HepG2 (cell line): ENCODE measurements at regions of chr11 and their contacts with region 1.

Region 1: GRCh38 chr11:57530596-57531507 is at the start of gene TIMM10:
- DNase-seq: peak; percentile 99
- ATAC-seq: peak; percentile 98
- H3K4me3 ChIP-seq: peak within 1 kb of the TSS; percentile 80 to 98 (median 96)
- H3K27ac ChIP-seq: peak within 1 kb of the TSS; percentile 64
- H3K4me1 ChIP-seq: peaks cover 42% of the 10 kb centered on the region
- H3K27me3 ChIP-seq: peaks cover 0 to 5% of the 10 kb centered on the region in 2 experiments; a peak in 1 of 5 replicates
- CTCF ChIP-seq: no peak; the same call in 1 of the 2 replicates
- EP300 ChIP-seq: peak in 1 of 2 experiments; percentile 21; a peak in 2 of 4 replicates
- POLR2A ChIP-seq: peak; percentile 64 to 70
- RAD21 ChIP-seq: no peak
- total RNA-seq, gene TIMM10: 82.2 and 103 TPM in 2 replicates

Region 2: GRCh38 chr11:57480409-57481137 is 50.3 kb before region 1 on chr11:
- CTCF ChIA-PET with region 1: no interaction called
- POLR2A ChIA-PET with region 1: interaction called, 3 read pairs
- in situ Hi-C with region 1: no loop called
- intact Hi-C with region 1: loop called (anchors 1 kb)
- DNase-seq: peak; percentile 61
- ATAC-seq: peak; percentile 71
- H3K4me3 ChIP-seq: peak overlapping the region in 1 of 3 experiments; percentile 28; a peak in 1 of 6 replicates
- H3K27ac ChIP-seq: peak overlapping the region; percentile 65
- H3K4me1 ChIP-seq: peaks cover 30% of the 10 kb centered on the region
- H3K27me3 ChIP-seq: no peaks in the 10 kb centered on the region
- CTCF ChIP-seq: peak; percentile 90
- EP300 ChIP-seq: no peak
- POLR2A ChIP-seq: no peak; a peak in 1 of 4 replicates
- RAD21 ChIP-seq: peak; percentile 23; the same call in 1 of the 2 replicates

Region 3: GRCh38 chr11:57493507-57494503 is 37.0 kb before region 1 on chr11:
- CTCF ChIA-PET with region 1: interaction called, 101 read pairs
- POLR2A ChIA-PET with region 1: interaction called, 38 read pairs
- in situ Hi-C with region 1: loop called (anchors 5 kb)
- intact Hi-C with region 1: loop called (anchors 1 kb)
- DNase-seq: peak; percentile 73
- ATAC-seq: peak; percentile 45
- H3K4me3 ChIP-seq: no peak overlapping the region
- H3K27ac ChIP-seq: peak overlapping the region; percentile 76
- H3K4me1 ChIP-seq: peaks cover 54% of the 10 kb centered on the region
- H3K27me3 ChIP-seq: no peaks in the 10 kb centered on the region
- CTCF ChIP-seq: peak; percentile 97
- EP300 ChIP-seq: peak in 1 of 2 experiments; percentile 72; a peak in 2 of 4 replicates
- POLR2A ChIP-seq: no peak
- RAD21 ChIP-seq: peak; percentile 96

Region 4: DNA sequence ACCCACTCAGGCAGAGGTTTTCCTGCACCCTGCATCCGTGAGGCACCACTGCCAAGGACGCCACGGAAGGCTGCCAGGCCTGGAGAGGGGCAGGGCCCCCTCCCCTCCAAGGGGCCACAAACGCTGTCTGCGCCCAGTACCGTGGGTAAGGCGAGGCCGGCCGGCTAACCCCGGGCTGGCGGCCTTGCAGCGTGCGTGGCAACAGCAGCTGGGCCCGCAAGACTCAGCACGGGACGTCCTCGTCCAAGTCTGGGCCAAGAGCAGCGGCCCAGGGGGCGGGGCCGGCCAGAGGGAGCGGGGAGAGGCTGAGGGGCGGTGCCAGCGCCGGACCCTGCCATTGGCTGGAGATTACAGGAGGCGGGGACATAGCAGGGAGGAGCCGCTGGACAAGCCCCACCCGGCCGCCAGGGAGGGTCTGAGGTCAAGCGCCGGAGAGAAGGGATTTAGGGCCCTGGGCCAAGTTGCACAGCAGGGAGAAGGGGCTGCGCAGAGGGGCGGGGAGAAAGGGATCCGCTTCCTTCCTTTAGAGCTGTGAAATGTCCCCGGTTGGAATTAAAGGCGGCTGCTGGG is 31.4 kb before region 1 on chr11:
- CTCF ChIA-PET with region 1: interaction called, 101 read pairs
- POLR2A ChIA-PET with region 1: interaction called, 22 read pairs
- in situ Hi-C with region 1: loop called (anchors 5 kb)
- intact Hi-C with region 1: no loop called
- DNase-seq: peak; percentile 84
- ATAC-seq: peak; percentile 77
- H3K4me3 ChIP-seq: peak overlapping the region in 1 of 3 experiments; percentile 5; a peak in 1 of 6 replicates
- H3K27ac ChIP-seq: peak overlapping the region; percentile 97
- H3K4me1 ChIP-seq: peaks cover 94% of the 10 kb centered on the region
- H3K27me3 ChIP-seq: no peaks in the 10 kb centered on the region
- CTCF ChIP-seq: no peak
- EP300 ChIP-seq: 0 out of 4 replicates have a peak, but pooled peaks of 1 of the 2 experiments have one; percentile 2
- POLR2A ChIP-seq: peak; percentile 41 to 63; a peak in 3 of 4 replicates
- RAD21 ChIP-seq: peak; percentile 24; the same call in 1 of the 2 replicates

Region 5: DNA sequence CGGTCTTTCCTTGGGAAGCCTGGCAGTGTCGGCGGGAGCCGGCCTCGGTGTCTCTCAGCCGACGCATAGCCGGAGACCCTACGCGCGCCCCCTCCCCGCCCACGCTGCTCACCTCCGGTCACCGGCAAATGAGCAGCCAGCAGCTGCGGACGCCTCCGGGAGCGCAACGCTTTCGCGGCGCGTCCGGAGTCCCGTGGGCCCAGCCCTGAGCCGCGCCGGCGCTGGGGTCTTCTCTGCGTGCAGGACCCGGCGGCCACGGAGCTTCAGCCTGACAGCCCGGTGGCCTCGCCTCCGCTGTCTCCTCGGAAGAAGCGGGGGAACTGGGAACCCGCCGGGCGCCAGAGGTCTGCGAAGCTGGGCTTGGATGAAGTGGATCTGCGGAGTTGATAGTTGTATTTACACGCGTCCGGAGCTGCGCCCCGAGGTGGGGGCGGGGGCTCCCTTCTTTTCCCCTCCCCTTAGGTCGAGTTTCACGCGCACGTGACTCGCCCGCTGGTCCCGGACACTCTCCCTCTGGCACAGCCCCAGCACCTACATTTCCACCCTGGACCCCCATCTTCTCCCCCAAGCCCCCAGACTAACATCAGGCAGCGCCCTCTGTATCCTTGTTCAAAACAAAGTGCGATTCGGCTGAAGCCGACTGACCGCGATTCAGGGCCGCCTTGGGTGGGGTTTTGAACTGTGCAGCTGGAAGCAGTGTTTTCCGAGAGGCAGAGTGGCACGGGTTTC is 15.4 kb before region 1 on chr11 and contains the start of gene SLC43A1:
- CTCF ChIA-PET with region 1: no interaction called
- POLR2A ChIA-PET with region 1: interaction called, 42 read pairs
- in situ Hi-C with region 1: no loop called
- intact Hi-C with region 1: loop called (anchors 1 kb)
- DNase-seq: peak; percentile 46
- ATAC-seq: peak; percentile 73
- H3K4me3 ChIP-seq: peak within 1 kb of the TSS; percentile 76 to 95 (median 86)
- H3K27ac ChIP-seq: peak within 1 kb of the TSS; percentile 82
- H3K4me1 ChIP-seq: peaks cover 61% of the 10 kb centered on the region
- H3K27me3 ChIP-seq: no peaks in the 10 kb centered on the region
- CTCF ChIP-seq: peak; percentile 32
- EP300 ChIP-seq: no peak
- POLR2A ChIP-seq: peak in 1 of 2 experiments; percentile 75; a peak in 3 of 4 replicates
- RAD21 ChIP-seq: no peak
- total RNA-seq, gene SLC43A1: 40.0 and 72.3 TPM in 2 replicates

Region 6: GRCh38 chr11:57562596-57562995 is 31.7 kb after region 1 on chr11:
- CTCF ChIA-PET with region 1: no interaction called
- POLR2A ChIA-PET with region 1: interaction called, 3 read pairs
- in situ Hi-C with region 1: no loop called
- intact Hi-C with region 1: loop called (anchors 1 kb)
- DNase-seq: no peak
- ATAC-seq: peak; percentile 26; the same call in 1 of the 3 replicates
- H3K4me3 ChIP-seq: no peak overlapping the region
- H3K27ac ChIP-seq: no peak overlapping the region
- H3K4me1 ChIP-seq: peaks cover 9% of the 10 kb centered on the region; the same call in 1 of the 2 replicates
- H3K27me3 ChIP-seq: no peaks in the 10 kb centered on the region; a peak in 1 of 5 replicates
- CTCF ChIP-seq: peak; percentile 53
- EP300 ChIP-seq: no peak
- POLR2A ChIP-seq: no peak
- RAD21 ChIP-seq: no peak; the same call in 1 of the 2 replicates

Region 7: DNA sequence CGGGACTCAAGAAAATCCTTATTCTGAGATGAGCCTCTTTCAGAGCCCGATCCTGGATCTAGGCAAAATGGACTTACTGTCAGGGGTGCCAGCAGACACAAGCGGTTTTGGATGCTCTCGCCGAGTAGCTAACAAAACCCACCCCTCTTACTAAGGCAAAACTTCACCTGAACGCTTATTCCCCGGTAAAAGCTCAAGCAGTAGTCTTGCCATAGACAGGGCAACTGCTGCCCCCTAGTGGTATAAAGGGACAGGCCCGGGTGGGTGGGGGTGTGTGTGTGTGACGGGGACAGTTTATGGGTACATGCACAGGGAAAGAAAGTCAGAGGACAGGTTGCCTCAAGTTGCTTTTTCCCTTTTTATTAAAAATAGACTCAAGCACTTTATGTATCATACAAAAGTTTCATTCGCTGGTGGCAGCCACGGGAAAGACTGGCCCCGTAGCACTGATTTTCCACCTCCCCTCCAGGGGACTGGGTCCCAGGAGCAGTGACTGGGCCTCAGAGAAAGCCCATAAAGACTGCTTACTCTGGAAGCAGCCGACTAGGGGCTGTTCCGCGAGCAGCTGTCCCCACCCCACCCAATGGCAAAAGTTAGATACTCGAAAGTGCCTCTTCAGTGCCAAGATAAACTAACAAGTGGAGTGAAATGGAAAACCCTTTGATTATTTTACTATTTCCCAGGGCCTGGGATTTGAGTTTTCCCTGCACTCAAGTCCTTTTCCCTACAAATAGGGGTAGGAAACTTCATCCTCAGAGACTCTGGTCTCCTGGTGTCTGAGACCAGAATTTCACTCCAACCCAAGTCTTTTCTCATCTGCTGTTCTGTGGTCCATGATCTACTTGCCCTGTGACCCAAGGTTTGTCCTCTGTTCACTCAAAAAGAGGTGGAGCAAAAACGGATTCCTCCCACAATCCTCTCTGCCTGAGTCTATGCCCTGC is 114.2 kb after region 1 on chr11:
- CTCF ChIA-PET with region 1: interaction called, 3 read pairs
- POLR2A ChIA-PET with region 1: interaction called, 4 read pairs
- in situ Hi-C with region 1: no loop called
- intact Hi-C with region 1: loop called (anchors 5 kb)
- DNase-seq: peak; percentile 69
- ATAC-seq: peak; percentile 81
- H3K4me3 ChIP-seq: no peak overlapping the region
- H3K27ac ChIP-seq: no peak overlapping the region
- H3K4me1 ChIP-seq: peaks cover 37% of the 10 kb centered on the region
- H3K27me3 ChIP-seq: peaks cover 6 to 42% of the 10 kb centered on the region in 2 experiments
- CTCF ChIP-seq: peak; percentile 86
- EP300 ChIP-seq: no peak
- POLR2A ChIP-seq: no peak
- RAD21 ChIP-seq: peak; percentile 52